Mammary epithelial cell (primary cell): ENCODE measurements at regions of chr1 and their contacts with region 1.

Region 1: GRCh38 chr1:198287916-198288315 is 131.1 kb downstream of the NEK7 start:
- DNase-seq: no peak
- H3K4me3 ChIP-seq: no peak overlapping the region
- H3K27ac ChIP-seq: no peak overlapping the region
- H3K4me1 ChIP-seq: no peaks in the 10 kb centered on the region
- H3K27me3 ChIP-seq: no peaks in the 10 kb centered on the region
- CTCF ChIP-seq: no peak

Region 2: DNA sequence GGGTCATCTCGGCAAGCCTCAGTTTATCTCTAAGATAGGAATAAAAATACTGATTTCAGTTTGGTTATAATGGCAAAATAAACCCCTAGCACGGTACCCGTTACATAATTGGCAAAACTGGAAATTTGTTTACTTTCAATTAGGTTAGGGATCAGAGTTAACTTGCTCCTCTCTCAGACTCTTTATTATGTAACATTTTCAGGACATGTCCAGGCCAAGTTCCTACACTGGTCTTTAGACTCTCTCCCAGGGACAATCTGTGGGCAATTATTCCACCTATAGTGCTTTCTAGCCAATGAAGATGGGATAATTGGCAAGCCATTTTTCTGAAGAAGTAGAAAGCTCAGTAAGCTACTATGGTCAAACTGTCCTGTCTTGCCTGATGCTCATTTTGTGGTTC is 58.3 kb after region 1 on chr1:
- CTCF ChIA-PET with region 1: no interaction called
- dilution Hi-C with region 1: loop called (anchors 5 kb)
- in situ Hi-C with region 1: no loop called
- intact Hi-C with region 1: no loop called
- DNase-seq: no peak
- H3K4me3 ChIP-seq: no peak overlapping the region
- H3K27ac ChIP-seq: no peak overlapping the region
- H3K4me1 ChIP-seq: peaks cover 5% of the 10 kb centered on the region
- H3K27me3 ChIP-seq: no peaks in the 10 kb centered on the region
- CTCF ChIP-seq: no peak